Caco-2 (cell line): ENCODE measurements at regions of chr14 and their contacts with region 1.

Region 1: DNA sequence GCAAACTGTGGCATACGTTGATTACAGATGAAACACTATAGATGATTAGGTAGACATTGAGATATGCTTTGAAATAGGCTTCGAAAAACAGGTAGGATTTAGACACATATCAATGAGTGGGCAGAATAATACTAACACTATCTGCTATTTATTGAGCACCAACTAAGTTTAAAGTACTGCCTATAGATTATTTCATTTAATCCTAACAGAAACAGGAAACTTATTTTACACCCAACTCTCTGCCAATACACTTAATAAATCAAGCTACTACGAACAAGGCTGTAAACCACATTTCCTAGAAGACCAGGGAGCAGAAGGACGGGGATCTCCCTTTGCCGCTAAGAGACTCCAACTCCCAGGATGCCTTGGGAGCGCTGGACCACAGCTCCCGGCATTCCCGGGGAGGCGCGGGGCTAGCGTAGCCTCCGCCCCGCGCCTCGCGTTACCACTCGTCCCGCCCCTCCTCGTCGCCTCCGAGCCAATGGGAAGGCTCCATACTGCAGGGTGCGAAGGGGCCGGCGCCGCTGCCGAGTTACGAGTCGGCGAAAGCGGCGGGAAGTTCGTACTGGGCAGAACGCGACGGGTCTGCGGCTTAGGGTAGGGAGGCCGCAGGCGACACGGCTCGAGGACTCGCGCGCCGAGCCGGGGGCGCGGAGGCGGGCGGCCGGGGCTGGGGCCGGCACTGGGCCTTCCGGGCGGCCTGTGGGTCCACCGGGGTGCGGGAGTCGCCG is at the start of gene VRK1:
- DNase-seq: peak; percentile 95 to 96
- H3K4me3 ChIP-seq: peak within 1 kb of the TSS; percentile 83
- H3K4me3 Mint-ChIP-seq: peak within 1 kb of the TSS; percentile 89
- H3K27ac Mint-ChIP-seq: peak within 1 kb of the TSS; percentile 82
- H3K4me1 ChIP-seq: no peaks in the 10 kb centered on the region
- H3K4me1 Mint-ChIP-seq: peaks cover 8% of the 10 kb centered on the region
- H3K27me3 ChIP-seq: no peaks in the 10 kb centered on the region
- H3K27me3 Mint-ChIP-seq: no peaks in the 10 kb centered on the region
- CTCF ChIP-seq: no peak
- total RNA-seq, gene VRK1: 35.3 and 42.1 TPM in 2 replicates

Region 2: GRCh38 chr14:96762650-96763049 is 34.4 kb before region 1 on chr14:
- CTCF ChIA-PET with region 1: no interaction called
- POLR2A ChIA-PET with region 1: interaction called, 5 read pairs
- intact Hi-C with region 1: loop called (anchors 2 kb)
- DNase-seq: peak; percentile 58 to 71
- H3K4me3 ChIP-seq: no peak overlapping the region
- H3K4me3 Mint-ChIP-seq: peak overlapping the region; percentile 64
- H3K27ac Mint-ChIP-seq: no peak overlapping the region
- H3K4me1 ChIP-seq: no peaks in the 10 kb centered on the region
- H3K4me1 Mint-ChIP-seq: no peaks in the 10 kb centered on the region
- H3K27me3 ChIP-seq: no peaks in the 10 kb centered on the region
- H3K27me3 Mint-ChIP-seq: peaks cover 11% of the 10 kb centered on the region
- CTCF ChIP-seq: no peak

Region 3: DNA sequence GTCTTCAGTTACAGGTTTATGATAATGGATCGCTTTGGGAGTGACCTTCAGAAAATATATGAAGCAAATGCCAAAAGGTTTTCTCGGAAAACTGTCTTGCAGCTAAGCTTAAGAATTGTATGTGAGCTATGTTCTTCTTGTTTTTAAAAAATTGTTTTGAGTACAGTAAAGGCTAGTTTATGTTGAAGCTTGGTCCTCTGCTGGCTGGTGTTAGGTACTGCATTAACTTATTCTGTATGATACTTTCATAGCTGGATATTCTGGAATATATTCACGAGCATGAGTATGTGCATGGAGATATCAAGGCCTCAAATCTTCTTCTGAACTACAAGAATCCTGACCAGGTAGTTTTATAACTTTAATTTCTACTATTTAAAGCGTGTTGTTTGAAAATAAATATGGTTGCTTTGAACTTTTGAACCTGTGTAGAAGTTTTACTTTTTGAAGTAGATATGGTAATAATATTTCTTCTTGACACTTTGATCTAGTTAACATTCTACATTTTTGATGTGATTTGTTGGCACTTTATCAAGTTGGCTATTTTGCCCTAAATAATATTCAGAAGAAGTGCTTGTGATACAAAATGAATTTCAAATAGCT is 55.9 kb after region 1 on chr14:
- CTCF ChIA-PET with region 1: interaction called, 10 read pairs
- POLR2A ChIA-PET with region 1: no interaction called
- intact Hi-C with region 1: no loop called
- DNase-seq: peak in 1 of 2 experiments; percentile 21
- H3K4me3 ChIP-seq: no peak overlapping the region
- H3K4me3 Mint-ChIP-seq: no peak overlapping the region
- H3K27ac Mint-ChIP-seq: no peak overlapping the region
- H3K4me1 ChIP-seq: peaks cover 7% of the 10 kb centered on the region; the same call in 1 of the 2 replicates
- H3K4me1 Mint-ChIP-seq: peaks cover 14% of the 10 kb centered on the region
- H3K27me3 ChIP-seq: no peaks in the 10 kb centered on the region
- H3K27me3 Mint-ChIP-seq: no peaks in the 10 kb centered on the region
- CTCF ChIP-seq: peak; percentile 53 to 64